ENCODE measurements at regions of chr7 and their contacts with region 1.

Region 1: DNA sequence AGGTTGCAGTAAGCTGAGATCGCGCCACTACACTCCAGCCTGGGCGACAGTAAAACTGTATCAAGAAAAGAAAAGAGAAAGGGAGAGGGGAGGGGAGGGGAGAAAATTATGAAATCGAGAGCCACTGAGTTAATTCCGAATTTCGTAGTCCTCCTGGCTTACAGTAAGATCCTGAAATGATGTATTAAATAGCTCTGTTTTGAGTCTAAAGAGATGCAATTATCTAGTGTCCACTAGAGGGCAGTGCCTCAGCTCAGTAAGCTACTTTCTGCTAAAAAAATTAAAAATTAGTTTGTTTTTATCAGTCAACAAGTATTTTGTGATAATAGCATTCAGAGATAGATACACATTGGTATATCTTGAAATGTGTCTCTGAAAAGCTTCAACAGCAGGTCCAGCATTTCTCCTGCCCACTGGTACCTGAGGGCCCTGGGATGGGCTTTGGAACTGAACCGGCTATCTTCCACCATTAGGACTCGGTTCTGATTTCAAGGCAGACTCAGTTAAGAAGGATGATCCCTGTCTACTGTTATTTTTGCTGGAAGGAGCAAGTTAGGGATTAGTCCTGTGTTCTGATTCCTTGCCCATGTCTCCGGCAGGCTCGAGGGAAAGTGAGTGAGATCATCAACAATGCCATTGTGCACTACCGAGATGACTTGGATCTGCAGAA is 19.5 kb downstream of the TSPAN33 start:
- DNase-seq: peak; percentile 69 to 85 (median 77)
- H3K4me3 ChIP-seq: no peak overlapping the region
- H3K27ac ChIP-seq: no peak overlapping the region
- H3K4me1 ChIP-seq: peaks cover 0 to 8% (median 3%) of the 10 kb centered on the region in 4 experiments
- H3K27me3 ChIP-seq: no peaks in the 10 kb centered on the region

Region 2: DNA sequence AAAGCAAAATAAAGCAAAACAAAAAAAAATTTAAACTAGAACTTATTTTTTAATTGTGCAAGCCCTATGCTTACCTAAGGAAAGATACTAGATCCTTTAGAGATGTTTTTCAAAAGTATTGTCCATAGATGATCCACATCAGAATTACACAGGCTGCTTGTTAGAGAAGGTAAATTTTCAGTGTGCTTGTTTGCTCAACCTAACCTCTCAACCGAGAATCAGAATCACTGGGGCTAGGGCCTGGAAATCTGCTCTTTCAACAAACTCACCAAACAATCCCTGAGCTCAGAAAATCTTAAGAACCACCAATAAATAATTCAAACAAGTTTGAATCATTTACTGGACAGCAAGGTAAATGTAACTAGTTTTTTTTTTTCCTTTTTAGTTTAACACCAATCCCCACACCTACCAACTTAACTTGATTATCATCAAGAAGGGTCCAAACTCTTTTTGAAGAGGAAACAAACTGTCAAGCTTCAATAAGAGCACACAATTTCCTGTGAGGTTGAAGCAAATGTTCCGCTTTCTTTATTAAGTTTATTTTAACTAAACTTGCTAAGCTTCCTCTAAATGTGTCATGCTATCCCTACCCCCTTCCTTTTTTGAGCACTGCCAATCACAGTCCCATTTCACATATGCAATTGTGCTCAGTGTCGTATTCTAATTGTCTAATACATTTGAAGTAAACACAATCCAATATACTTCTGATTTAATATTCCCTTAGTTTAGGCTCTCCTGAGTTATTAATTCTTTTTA is 26.9 kb before region 1 on chr7:
- CTCF ChIA-PET with region 1: interaction called, 11 read pairs
- POLR2A ChIA-PET with region 1: no interaction called
- DNase-seq: peak; percentile 54 to 86 (median 77)
- H3K4me3 ChIP-seq: peak overlapping the region in 2 of 7 experiments; percentile 17 to 41
- H3K27ac ChIP-seq: peak overlapping the region in 1 of 2 experiments; percentile 64
- H3K4me1 ChIP-seq: peaks cover 11 to 33% (median 26%) of the 10 kb centered on the region in 4 experiments
- H3K27me3 ChIP-seq: no peaks in the 10 kb centered on the region

Region 3: DNA sequence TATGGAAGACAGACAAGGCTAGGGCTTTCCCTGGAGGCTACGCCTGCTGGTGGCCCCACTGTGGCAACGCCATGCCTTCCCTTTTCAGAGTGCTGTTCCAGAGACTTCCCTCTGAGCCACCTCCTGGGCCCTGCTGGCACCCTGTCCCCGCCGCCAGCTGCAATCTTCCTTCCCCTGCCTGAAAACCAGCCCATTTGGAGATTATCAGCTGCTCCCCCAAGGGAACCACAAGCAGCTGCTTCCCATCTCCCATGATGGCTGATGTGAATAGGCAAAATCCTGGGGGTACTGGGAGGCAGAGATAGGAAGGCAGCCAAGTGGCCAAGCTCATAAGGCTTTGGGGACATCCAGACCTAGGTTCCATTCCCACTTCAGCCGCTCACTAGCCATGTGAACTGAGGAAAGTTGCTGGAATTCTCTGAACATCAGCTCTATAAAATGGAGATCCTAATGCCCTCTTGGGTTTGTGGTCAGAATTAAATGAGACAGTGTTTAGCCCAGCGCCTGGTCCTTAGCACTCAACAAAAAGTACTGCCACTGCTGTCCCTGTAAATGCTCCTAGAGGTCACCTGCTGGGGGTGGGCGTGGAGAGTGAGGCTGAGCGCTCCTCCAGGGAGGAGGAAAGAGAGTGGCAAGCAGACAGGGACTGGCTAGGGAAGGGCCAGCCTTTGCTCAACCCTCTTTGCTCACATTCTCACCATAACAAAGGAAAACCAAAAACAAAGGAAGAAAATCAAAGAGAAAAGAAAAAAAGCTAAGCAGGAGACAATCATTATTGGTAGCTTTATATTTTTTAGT is 13.6 kb before region 1 on chr7:
- CTCF ChIA-PET with region 1: interaction called, 23 read pairs
- POLR2A ChIA-PET with region 1: no interaction called
- DNase-seq: peak; percentile 90 to 97 (median 96)
- H3K4me3 ChIP-seq: peak overlapping the region in 1 of 7 experiments; percentile 33
- H3K27ac ChIP-seq: peak overlapping the region in 1 of 2 experiments; percentile 46
- H3K4me1 ChIP-seq: peaks cover 0 to 61% (median 48%) of the 10 kb centered on the region in 4 experiments
- H3K27me3 ChIP-seq: no peaks in the 10 kb centered on the region

Region 4: GRCh38 chr7:129210256-129210988 is 46.4 kb after region 1 on chr7:
- CTCF ChIA-PET with region 1: interaction called, 170 read pairs
- POLR2A ChIA-PET with region 1: no interaction called
- DNase-seq: peak; percentile 56 to 78 (median 70)
- H3K4me3 ChIP-seq: no peak overlapping the region
- H3K27ac ChIP-seq: no peak overlapping the region
- H3K4me1 ChIP-seq: no peaks in the 10 kb centered on the region
- H3K27me3 ChIP-seq: no peaks in the 10 kb centered on the region

Measured in common myeloid progenitor, CD34-positive (primary cell).